Esophagus muscularis mucosa (tissue), 4 donors: ENCODE measurements at regions of chr17 and their contacts with region 1.

Region 1: GRCh38 chr17:61389670-61390478 is 9.8 kb upstream of the TBX2 start:
- DNase-seq: no peak
- H3K4me3 ChIP-seq: peak overlapping the region in 3 of 4 donors; percentile 28 to 38 (median 35)
- H3K27ac ChIP-seq: peak overlapping the region in 2 of 4 donors; percentile 5 to 20
- H3K4me1 ChIP-seq: peaks cover 5 to 29% (median 18%) of the 10 kb centered on the region in 4 donors
- H3K27me3 ChIP-seq: no peaks in the 10 kb centered on the region
- CTCF ChIP-seq: peak; percentile 82 to 90 (median 84)
- EP300 ChIP-seq: no peak
- POLR2A ChIP-seq: no peak

Region 2: DNA sequence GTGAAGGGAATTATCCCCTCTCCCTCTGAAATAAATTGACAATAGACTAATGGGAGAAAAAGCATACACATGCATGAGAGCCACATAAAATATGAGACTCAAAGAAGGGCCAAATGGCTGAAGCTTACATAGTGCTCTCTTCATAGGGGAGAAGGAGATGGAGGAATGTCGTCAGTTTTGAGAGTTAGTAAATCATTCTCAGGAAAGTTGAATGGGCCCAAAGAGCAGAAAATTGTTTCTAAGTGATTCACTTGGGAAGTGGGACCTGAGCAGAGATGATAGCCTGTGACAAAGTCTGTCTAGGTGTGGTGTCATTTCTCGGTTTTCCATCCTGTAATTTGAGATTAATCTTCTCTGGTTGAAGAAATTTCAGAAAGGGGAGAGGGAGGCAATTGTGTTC is 677.2 kb before region 1 on chr17:
- intact Hi-C with region 1: loop called (anchors 10 kb)
- DNase-seq: no peak
- H3K4me3 ChIP-seq: no peak overlapping the region
- H3K27ac ChIP-seq: no peak overlapping the region
- H3K4me1 ChIP-seq: no peaks in the 10 kb centered on the region
- H3K27me3 ChIP-seq: no peaks in the 10 kb centered on the region
- CTCF ChIP-seq: no peak
- EP300 ChIP-seq: no peak
- POLR2A ChIP-seq: no peak

Region 3: DNA sequence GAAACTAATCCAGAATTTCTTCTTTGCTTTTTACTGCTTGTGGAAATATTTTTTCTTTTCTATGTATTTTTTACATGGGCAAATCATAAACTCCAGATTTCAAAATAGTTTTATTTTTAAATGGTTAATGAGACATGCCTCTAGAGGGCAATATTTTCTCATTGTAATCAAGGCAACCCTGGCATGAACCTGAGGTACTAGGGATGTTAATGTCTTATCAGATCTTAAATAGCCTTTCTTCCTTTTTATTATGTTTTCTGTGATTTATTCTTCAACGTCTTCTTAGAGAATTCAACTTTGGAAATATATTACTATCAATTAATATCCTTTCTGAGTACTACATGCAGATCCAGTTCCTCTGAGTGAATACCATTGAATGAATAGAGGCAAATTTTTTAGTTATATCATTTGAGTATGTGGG is 387.5 kb before region 1 on chr17:
- intact Hi-C with region 1: loop called (anchors 5 kb)
- DNase-seq: no peak
- H3K4me3 ChIP-seq: no peak overlapping the region
- H3K27ac ChIP-seq: no peak overlapping the region
- H3K4me1 ChIP-seq: no peaks in the 10 kb centered on the region
- H3K27me3 ChIP-seq: no peaks in the 10 kb centered on the region
- CTCF ChIP-seq: peak; percentile 51 to 54 (median 53)
- EP300 ChIP-seq: no peak
- POLR2A ChIP-seq: no peak

Region 4: DNA sequence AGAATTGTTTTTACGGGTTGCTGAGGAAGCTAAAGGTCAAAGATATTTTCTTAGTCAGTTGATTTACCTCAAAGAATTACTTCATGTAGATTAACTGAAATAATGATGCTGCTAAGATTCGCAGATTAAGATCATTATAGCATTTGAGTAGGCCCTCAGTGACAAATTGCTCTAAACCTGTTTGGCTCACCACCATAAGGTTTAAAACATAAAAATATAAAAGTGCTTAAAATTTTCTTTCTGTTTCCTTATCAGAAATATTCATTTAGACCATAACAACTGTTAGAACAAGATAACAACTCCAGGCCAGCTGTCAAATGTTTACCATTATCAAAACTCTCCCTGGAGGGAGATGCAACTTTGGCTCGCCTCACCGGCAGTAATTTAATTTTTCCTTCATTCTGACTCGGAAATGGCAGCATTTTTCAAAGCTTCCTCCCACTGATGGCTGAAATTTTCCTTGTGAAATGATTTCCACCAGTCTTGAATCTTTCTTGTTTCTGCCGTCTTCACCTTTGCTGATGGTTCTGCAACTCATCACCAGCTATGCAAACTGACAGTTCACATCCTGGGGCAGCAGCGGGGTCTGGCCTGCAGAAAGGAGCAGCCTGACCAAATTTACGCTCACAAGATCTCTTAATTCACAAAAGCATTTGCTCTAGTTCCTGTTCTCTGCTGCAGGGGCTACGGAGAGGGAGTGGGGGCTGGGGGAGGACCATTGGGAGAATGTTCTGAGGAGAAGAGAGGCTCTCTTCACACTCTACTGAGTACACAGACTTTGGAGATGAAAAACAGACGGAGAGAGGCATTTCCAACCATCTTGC is 244.9 kb before region 1 on chr17:
- intact Hi-C with region 1: loop called (anchors 10 kb)
- DNase-seq: no peak
- H3K4me3 ChIP-seq: no peak overlapping the region
- H3K27ac ChIP-seq: peak overlapping the region in 1 of 4 donors; percentile 32
- H3K4me1 ChIP-seq: peaks cover 0 to 34% (median 30%) of the 10 kb centered on the region in 4 donors
- H3K27me3 ChIP-seq: no peaks in the 10 kb centered on the region
- CTCF ChIP-seq: no peak
- EP300 ChIP-seq: no peak
- POLR2A ChIP-seq: no peak

Region 5: GRCh38 chr17:61251939-61252896 is 137.7 kb before region 1 on chr17:
- intact Hi-C with region 1: loop called (anchors 10 kb)
- DNase-seq: peak; percentile 98
- H3K4me3 ChIP-seq: peak overlapping the region in 3 of 4 donors; percentile 1 to 13 (median 11)
- H3K27ac ChIP-seq: peak overlapping the region; percentile 82 to 87 (median 83)
- H3K4me1 ChIP-seq: peaks cover 56 to 74% (median 69%) of the 10 kb centered on the region in 4 donors
- H3K27me3 ChIP-seq: no peaks in the 10 kb centered on the region
- CTCF ChIP-seq: no peak
- EP300 ChIP-seq: peak; percentile 63
- POLR2A ChIP-seq: no peak